Calu3 (cell line): ENCODE measurements at regions of chr10 and their contacts with region 1.

Region 1: DNA sequence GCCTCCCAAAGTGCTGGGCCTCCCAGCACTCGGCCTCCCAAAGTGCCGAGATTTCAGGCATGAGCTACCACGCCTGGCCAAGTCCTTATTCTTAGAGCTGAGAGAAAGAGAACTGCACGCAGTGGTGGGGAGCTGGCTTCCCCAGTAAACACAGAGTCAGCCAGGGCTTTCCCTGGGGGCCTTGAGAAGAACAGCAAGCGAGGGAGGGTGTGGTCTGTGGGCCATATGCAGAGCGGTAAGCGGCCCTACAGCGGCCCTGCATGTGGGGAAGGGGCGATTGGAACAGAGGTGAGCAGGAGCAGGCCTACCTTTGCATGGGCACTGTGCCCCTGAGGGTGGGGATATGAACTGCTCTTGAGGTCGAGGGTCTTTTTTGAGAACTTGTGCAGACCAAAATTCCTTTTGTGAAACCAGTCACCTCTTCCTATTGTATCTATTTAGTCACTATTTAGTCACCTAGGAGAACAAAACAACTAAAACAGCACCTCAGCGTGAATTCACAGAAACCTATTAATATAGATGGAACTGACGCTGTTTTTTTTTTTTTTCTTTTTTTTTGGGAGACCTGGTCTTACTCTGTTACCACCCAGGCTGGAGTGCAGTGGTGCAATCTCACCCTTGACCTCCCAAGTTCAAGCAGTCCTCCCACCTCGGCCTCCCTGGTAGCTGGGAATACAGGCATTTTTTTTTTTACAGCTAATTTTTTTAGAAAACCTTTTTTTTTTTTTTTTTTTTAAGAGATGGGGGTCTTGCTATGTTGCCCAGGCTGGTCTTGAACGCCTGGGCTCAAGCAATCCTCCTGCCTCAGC is 36.9 kb upstream of the SH2D4B start:
- DNase-seq: no peak
- H3K4me3 Mint-ChIP-seq: peak overlapping the region; percentile 34
- H3K27ac Mint-ChIP-seq: peak overlapping the region; percentile 42
- H3K4me1 Mint-ChIP-seq: peaks cover 96% of the 10 kb centered on the region
- H3K27me3 Mint-ChIP-seq: no peaks in the 10 kb centered on the region
- CTCF ChIP-seq: no peak

Region 2: DNA sequence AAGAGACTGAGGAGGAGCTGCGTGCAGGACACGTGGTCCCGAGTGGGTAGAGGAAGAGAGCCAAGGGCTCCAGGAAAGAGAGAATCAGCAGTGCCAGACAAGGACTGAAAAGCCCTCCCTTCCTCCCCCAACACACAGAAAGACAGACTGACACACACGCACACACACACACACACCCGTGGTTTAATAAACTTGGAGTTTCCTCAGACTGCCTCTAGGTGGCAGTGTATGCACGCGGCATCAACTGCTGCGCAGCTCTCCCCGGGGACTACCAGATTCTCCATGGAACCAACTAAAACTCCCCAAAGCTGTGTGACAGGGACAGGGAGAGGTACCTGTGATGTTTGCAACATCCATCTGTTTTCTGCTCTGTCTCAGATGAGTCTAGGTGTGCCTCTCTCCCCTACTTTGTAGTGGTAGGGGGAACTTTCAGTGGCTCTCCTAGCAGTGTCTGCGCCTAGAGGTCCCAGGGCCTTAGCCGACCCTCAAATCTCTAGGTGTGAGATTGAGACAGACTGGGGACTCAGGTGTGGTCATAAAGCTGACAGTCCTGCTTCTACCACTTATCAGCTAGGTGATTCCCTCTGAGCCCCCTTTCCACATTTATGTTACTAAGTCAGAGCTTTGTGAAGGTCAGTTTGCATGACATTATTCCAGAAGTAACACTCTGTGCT is 56.0 kb before region 1 on chr10:
- CTCF ChIA-PET with region 1: interaction called, 116 read pairs
- intact Hi-C with region 1: loop called (anchors 2 kb)
- DNase-seq: peak; percentile 66
- H3K4me3 Mint-ChIP-seq: no peak overlapping the region
- H3K27ac Mint-ChIP-seq: no peak overlapping the region
- H3K4me1 Mint-ChIP-seq: peaks cover 31% of the 10 kb centered on the region
- H3K27me3 Mint-ChIP-seq: peaks cover 20% of the 10 kb centered on the region
- CTCF ChIP-seq: peak; percentile 73

Region 3: GRCh38 chr10:80453701-80454513 is 46.9 kb before region 1 on chr10 and contains the start of gene TSPAN14:
- CTCF ChIA-PET with region 1: interaction called, 122 read pairs
- intact Hi-C with region 1: no loop called
- DNase-seq: peak; percentile 88
- H3K4me3 Mint-ChIP-seq: no peak within 1 kb of the TSS
- H3K27ac Mint-ChIP-seq: peak within 1 kb of the TSS; percentile 86
- H3K4me1 Mint-ChIP-seq: peaks cover 23% of the 10 kb centered on the region
- H3K27me3 Mint-ChIP-seq: no peaks in the 10 kb centered on the region
- CTCF ChIP-seq: no peak
- total RNA-seq, gene TSPAN14: 98.6 and 116 TPM in 2 replicates

Region 4: GRCh38 chr10:80472234-80473095 is 28.3 kb before region 1 on chr10:
- CTCF ChIA-PET with region 1: interaction called, 10 read pairs
- intact Hi-C with region 1: no loop called
- DNase-seq: no peak
- H3K4me3 Mint-ChIP-seq: no peak overlapping the region
- H3K27ac Mint-ChIP-seq: peak overlapping the region; percentile 50
- H3K4me1 Mint-ChIP-seq: peaks cover 74% of the 10 kb centered on the region
- H3K27me3 Mint-ChIP-seq: no peaks in the 10 kb centered on the region
- CTCF ChIP-seq: no peak